Activated T-helper 1 cell treated with anti-CD3 and anti-CD28 coated beads, Interleukin-12 subunit alpha, Interleukin-12 subunit beta, Interleukin-2, Interleukin-4 antibody, amounts not matched to agents 30 ng/mL and 10 ng/mL and 1 ng/mL, durations not matched to agents 14 hours and 24 hours and 36 hours (primary cell): ENCODE measurements at regions of chr3 and their contacts with region 1.

Region 1: DNA sequence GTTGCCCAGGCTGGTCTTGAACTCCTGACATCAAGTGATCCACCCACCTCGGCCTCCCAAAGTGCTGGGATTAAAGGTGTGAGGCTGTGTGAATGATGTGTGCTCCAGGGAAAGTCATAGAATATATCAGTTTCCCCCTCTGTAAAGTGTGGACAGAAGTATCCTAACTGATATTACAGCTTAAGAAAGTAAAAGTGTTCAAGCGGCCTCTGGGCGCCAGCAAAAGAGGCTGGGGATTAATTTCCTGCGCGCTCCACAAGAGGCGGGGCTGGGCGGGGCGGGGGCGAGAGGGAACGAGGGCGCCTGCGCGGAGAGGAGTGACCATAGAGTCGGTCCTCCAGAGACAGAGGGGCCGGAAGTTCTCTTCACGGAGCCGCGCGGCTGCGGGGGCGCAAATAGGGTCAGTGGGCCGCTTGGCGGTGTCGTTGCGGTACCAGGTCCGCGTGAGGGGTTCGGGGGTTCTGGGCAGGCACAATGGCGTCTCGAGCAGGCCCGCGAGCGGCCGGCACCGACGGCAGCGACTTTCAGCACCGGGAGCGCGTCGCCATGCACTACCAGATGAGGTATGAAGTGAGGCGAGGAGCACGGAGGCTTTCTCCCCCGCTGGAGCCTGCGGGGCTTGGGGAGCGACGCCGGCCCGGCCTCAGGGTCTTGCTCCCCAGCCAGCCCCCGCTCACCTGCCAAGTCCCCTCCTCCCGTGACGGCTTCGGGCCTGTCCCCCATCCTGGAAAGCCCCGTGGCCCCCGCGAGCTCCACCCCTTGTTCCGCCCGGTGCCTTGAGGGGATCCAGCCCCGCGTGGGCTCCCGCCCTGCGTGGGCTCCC is at the start of gene JAGN1:
- DNase-seq: peak; percentile 82
- H3K4me3 Mint-ChIP-seq: peak within 1 kb of the TSS; percentile 97
- H3K27ac Mint-ChIP-seq: peak within 1 kb of the TSS; percentile 98
- H3K4me1 Mint-ChIP-seq: peaks cover 36% of the 10 kb centered on the region
- H3K27me3 Mint-ChIP-seq: no peaks in the 10 kb centered on the region
- total RNA-seq, gene JAGN1: 42.4 and 46.3 TPM in 2 replicates

Region 2: GRCh38 chr3:9396700-9397521 is 493.5 kb before region 1 on chr3:
- intact Hi-C with region 1: loop called (anchors 5 kb)
- DNase-seq: peak; percentile 98
- H3K4me3 Mint-ChIP-seq: peak overlapping the region; percentile 94
- H3K27ac Mint-ChIP-seq: peak overlapping the region; percentile 98
- H3K4me1 Mint-ChIP-seq: peaks cover 65% of the 10 kb centered on the region
- H3K27me3 Mint-ChIP-seq: no peaks in the 10 kb centered on the region

Region 3: DNA sequence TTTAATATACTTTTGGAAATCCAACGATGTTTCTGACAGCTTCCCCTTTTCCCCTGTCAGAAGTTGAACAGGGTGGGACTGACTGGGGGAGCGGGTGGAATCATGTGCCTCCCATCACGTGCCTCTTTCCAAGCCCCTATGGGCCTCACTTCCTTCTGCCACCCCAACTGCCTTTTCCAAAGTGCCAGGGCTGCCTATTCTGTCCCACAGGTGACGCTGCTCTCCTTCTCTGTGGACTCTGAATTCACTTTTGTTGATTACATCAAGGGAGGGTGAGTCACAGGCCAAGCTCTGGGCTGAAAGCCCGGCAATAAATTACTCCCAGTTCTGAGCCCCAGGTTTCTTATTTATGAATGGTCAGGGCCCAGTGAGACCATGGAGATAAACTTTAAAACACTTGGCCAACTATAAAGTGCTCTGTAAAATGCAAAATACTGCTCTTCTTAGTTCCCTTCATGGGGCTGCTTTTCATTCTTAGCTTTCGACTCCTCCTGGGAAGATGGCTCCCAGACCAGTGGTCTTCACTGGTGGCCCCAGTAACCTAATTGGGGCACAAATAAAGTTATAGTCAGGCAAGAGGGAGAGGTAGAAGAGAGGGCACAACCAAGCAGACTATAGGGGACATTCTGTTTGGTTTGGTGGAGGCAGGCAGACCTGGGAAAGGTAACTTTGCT is 174.6 kb before region 1 on chr3:
- intact Hi-C with region 1: no loop called
- DNase-seq: no peak
- H3K4me3 Mint-ChIP-seq: no peak overlapping the region
- H3K27ac Mint-ChIP-seq: no peak overlapping the region
- H3K4me1 Mint-ChIP-seq: no peaks in the 10 kb centered on the region
- H3K27me3 Mint-ChIP-seq: peaks cover 4% of the 10 kb centered on the region

Region 4: GRCh38 chr3:9749645-9750555 is 140.6 kb before region 1 on chr3 and contains the start of gene OGG1:
- intact Hi-C with region 1: loop called (anchors 1 kb)
- DNase-seq: peak; percentile 96
- H3K4me3 Mint-ChIP-seq: peak within 1 kb of the TSS; percentile 96
- H3K27ac Mint-ChIP-seq: peak within 1 kb of the TSS; percentile 95
- H3K4me1 Mint-ChIP-seq: peaks cover 61% of the 10 kb centered on the region
- H3K27me3 Mint-ChIP-seq: no peaks in the 10 kb centered on the region
- total RNA-seq, gene OGG1: 40.2 and 40.6 TPM in 2 replicates

Region 5: DNA sequence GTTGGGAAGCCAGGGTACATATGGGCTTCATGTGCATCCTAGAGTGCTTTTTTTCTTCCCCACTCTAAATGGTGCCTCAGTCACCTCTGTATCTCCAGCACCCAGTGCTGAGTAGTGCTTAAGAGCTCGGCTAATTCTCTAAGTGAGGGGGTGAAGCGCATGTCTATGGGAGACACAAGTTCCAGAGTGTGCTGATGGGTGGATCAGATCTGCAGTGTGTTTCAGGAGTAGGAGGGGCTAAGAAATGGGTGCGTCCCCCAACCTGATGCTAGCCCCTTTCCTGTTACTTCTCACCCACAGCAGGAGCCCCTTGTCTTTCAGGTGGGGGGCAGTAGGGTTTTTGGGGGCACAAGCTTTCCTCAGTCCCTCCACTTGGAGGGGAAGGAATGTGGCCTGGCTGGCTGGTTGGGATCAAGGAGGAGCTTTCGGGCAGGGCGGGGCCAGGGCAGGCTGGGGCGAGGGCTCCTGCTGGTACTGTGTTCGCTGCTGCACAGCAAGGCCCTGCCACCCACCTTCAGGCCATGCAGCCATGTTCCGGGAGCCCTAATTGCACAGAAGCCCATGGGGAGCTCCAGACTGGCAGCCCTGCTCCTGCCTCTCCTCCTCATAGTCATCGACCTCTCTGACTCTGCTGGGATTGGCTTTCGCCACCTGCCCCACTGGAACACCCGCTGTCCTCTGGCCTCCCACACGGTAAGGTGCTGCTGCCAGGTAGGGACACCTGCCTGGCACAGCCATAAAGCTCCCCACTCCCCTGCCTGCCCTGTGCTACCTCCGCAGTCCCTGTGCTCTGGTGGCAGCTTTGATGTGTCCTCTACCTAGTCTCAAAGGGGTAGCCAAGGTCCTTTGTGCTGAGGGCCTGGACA is 12.1 kb after region 1 on chr3 and contains the start of gene IL17RE:
- intact Hi-C with region 1: loop called (anchors 1 kb)
- DNase-seq: no peak
- H3K4me3 Mint-ChIP-seq: peak within 1 kb of the TSS; percentile 74
- H3K27ac Mint-ChIP-seq: peak within 1 kb of the TSS; percentile 90
- H3K4me1 Mint-ChIP-seq: peaks cover 42% of the 10 kb centered on the region
- H3K27me3 Mint-ChIP-seq: no peaks in the 10 kb centered on the region
- total RNA-seq, gene IL17RE: 3.2 and 3.5 TPM in 2 replicates

Region 6: GRCh38 chr3:9951962-9952805 is 61.7 kb after region 1 on chr3 and contains the start of gene PRRT3:
- intact Hi-C with region 1: loop called (anchors 1 kb)
- DNase-seq: peak; percentile 57
- H3K4me3 Mint-ChIP-seq: peak within 1 kb of the TSS; percentile 90
- H3K27ac Mint-ChIP-seq: peak within 1 kb of the TSS; percentile 40
- H3K4me1 Mint-ChIP-seq: peaks cover 14% of the 10 kb centered on the region
- H3K27me3 Mint-ChIP-seq: no peaks in the 10 kb centered on the region
- total RNA-seq, gene PRRT3: 16.4 and 16.8 TPM in 2 replicates

Region 7: GRCh38 chr3:10026084-10026890 is 135.8 kb after region 1 on chr3 and contains the start of gene FANCD2:
- intact Hi-C with region 1: loop called (anchors 1 kb)
- DNase-seq: peak; percentile 90
- H3K4me3 Mint-ChIP-seq: peak within 1 kb of the TSS; percentile 98
- H3K27ac Mint-ChIP-seq: peak within 1 kb of the TSS; percentile 99
- H3K4me1 Mint-ChIP-seq: peaks cover 33% of the 10 kb centered on the region
- H3K27me3 Mint-ChIP-seq: no peaks in the 10 kb centered on the region
- total RNA-seq, gene FANCD2: 63.4 and 64.2 TPM in 2 replicates